T-cell (primary cell): ENCODE measurements at regions of chr17 and their contacts with region 1.

Region 1: DNA sequence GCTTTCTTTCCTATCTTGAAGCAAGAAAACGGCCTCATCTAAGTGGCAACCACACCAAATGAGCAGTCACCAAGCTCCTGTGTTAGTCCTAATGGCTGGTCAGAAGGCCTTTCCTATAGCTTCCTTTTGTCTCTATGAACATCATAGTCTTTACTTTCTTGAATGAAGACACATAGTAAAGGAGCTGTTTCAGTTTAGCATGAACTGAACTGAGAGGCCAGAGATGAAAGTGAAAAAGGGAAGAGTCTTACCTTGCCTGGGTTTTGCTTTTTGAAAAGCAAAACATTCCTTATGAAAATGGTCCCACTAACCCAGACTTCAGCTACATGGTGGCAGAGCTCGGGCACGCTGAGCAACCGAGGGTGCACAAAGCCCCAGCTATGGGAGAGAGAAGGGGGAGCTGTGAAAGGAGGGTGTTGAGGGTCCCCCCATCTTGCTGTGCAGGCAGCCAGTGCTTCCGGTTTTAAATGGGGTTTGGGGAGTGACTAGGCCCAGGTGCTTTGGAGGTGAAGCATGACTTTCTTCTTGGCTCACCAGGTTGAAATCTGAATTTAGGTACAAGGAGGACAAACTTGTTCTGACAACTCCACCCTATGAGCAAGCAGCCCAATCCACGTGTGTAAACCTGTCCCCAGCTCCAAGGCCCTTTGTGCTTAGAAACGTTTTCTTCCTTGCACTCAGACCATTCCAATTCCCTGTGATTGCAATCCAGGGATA is 9.1 kb upstream of the PSMC3IP start:
- DNase-seq: no peak
- ATAC-seq: no peak
- H3K4me3 ChIP-seq: no peak overlapping the region
- H3K4me3 Mint-ChIP-seq: no peak overlapping the region
- H3K27ac ChIP-seq: no peak overlapping the region
- H3K27ac Mint-ChIP-seq: peak overlapping the region in 1 of 2 donors; percentile 64
- H3K4me1 ChIP-seq: no peaks in the 10 kb centered on the region
- H3K4me1 Mint-ChIP-seq: peaks cover 0 to 9% (median 5%) of the 10 kb centered on the region in 3 donors
- H3K27me3 ChIP-seq: no peaks in the 10 kb centered on the region
- H3K27me3 Mint-ChIP-seq: no peaks in the 10 kb centered on the region

Region 2: DNA sequence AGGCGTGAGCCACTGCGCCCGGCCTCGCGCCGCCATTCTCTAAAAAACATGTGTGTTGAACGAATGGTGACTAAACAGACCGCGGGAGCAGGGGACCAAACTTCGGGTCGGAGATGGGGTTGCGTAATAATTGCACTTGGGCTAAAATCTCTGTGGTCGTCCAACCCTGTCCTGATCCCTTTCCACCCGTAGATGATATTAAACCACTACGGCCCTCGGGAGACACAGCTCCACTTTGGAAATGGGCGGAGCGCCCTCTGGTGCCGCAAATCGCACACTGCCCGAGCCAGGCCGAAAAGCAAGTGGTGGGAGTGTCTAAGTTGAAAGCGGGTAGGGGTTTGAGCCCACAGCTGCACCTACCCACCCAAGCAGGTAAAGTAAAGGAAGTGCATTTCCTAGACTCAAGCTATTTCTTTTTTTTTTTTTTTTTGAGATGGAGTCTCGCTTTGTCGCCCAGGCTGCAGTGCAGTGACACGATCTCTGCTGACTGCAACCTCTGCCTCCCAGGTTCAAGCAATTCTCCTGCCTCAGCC is 180.6 kb before region 1 on chr17:
- CTCF ChIA-PET with region 1: no interaction called
- POLR2A ChIA-PET with region 1: interaction called in 1 of 2 experiments, 12 read pairs
- DNase-seq: peak; percentile 61 to 88 (median 80)
- ATAC-seq: peak; percentile 75 to 84 (median 80)
- H3K4me3 ChIP-seq: no peak overlapping the region
- H3K4me3 Mint-ChIP-seq: no peak overlapping the region
- H3K27ac ChIP-seq: no peak overlapping the region
- H3K27ac Mint-ChIP-seq: no peak overlapping the region
- H3K4me1 ChIP-seq: peaks cover 9 to 14% of the 10 kb centered on the region in 2 experiments
- H3K4me1 Mint-ChIP-seq: peaks cover 7 to 15% (median 12%) of the 10 kb centered on the region in 3 donors
- H3K27me3 ChIP-seq: peaks cover 0 to 19% of the 10 kb centered on the region in 2 experiments
- H3K27me3 Mint-ChIP-seq: peaks cover 0 to 4% of the 10 kb centered on the region in 2 donors

Region 3: DNA sequence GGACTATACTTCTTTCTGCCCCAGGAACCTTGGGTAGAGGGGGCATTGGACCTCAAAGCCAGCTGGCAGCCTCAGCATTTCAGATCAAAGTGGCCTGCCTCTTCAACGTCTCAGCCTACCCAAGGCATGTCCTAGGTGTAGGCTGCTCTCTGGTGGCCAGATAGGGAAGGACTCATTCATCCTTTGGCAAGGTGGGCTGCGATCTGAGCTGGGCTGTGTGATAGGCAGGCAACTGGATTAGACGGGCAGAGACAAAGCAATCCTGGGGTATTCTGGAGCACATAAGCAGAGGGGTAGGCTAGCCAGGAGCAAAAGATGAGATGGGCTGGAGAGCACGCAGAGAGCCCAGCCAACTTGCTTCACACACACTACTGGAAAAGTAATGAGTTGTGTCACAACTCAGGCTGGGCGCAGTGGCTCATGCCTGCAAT is 59.4 kb before region 1 on chr17:
- CTCF ChIA-PET with region 1: no interaction called
- POLR2A ChIA-PET with region 1: no interaction called
- DNase-seq: peak in 34 of 35 experiments; percentile 33 to 83 (median 62)
- ATAC-seq: peak; percentile 57 to 69 (median 62)
- H3K4me3 ChIP-seq: no peak overlapping the region
- H3K4me3 Mint-ChIP-seq: peak overlapping the region in 1 of 3 donors; percentile 13
- H3K27ac ChIP-seq: no peak overlapping the region
- H3K27ac Mint-ChIP-seq: peak overlapping the region; percentile 50 to 68
- H3K4me1 ChIP-seq: peaks cover 24 to 50% of the 10 kb centered on the region in 2 experiments
- H3K4me1 Mint-ChIP-seq: peaks cover 31 to 37% (median 35%) of the 10 kb centered on the region in 3 donors
- H3K27me3 ChIP-seq: peaks cover 0 to 14% of the 10 kb centered on the region in 2 experiments
- H3K27me3 Mint-ChIP-seq: no peaks in the 10 kb centered on the region

Region 4: DNA sequence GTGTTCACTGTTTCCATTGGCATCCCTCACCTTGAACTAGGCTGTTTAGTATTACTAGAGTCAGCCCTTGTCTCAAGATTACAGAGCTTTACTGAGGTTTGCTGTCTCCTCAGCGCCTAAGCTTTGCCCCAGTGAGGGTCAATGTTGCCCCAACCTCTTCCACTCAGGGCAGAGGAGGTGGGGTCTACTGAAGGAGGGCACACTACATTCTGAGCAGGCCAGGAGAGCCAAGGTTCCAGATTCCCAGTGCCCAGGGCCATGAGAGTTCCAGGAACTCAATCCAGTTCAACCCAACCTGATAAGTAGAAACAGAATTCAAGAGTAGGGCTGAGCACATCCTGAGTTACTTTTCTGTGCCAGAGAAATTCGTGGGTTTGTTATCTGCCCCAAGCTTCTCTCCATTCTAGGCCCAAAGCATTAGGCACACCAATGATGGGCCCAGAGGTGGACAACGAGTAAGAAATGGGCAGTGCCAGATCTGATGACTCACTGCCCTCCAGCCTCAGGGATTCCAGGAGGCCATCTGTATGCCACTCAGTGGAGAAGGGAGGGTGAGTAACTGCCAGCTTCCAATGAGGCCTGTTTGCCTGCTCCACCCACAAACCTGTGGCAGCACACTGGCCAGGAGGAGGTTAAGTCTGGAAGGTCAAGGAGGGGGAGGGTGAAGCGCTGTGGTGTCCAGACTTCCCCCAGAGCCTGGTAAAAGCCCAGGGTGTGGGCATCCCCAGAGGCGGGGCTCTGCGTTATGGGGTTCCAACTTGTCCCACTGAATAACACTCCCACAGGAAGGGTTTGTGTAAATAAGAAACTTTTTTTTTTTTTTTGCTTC is 80.7 kb after region 1 on chr17:
- CTCF ChIA-PET with region 1: no interaction called
- POLR2A ChIA-PET with region 1: no interaction called
- DNase-seq: no peak
- ATAC-seq: no peak
- H3K4me3 ChIP-seq: no peak overlapping the region
- H3K4me3 Mint-ChIP-seq: no peak overlapping the region
- H3K27ac ChIP-seq: no peak overlapping the region
- H3K27ac Mint-ChIP-seq: no peak overlapping the region
- H3K4me1 ChIP-seq: peaks cover 4 to 16% of the 10 kb centered on the region in 2 experiments
- H3K4me1 Mint-ChIP-seq: peaks cover 14 to 30% (median 20%) of the 10 kb centered on the region in 3 donors
- H3K27me3 ChIP-seq: peaks cover 9 to 30% of the 10 kb centered on the region in 2 experiments
- H3K27me3 Mint-ChIP-seq: peaks cover 6 to 18% of the 10 kb centered on the region in 2 donors